Gastrocnemius medialis (tissue), 4 donors: ENCODE measurements at regions of chr6 and their contacts with region 1.

Region 1: GRCh38 chr6:157379656-157380454 is 1.1 kb upstream of the ZDHHC14 start:
- DNase-seq: peak; percentile 86
- ATAC-seq: peak; percentile 78
- H3K4me3 ChIP-seq: peak overlapping the region; percentile 90 to 99 (median 94)
- H3K27ac ChIP-seq: peak overlapping the region; percentile 97 to 98 (median 98)
- H3K4me1 ChIP-seq: peaks cover 14 to 16% of the 10 kb centered on the region in 2 donors
- H3K27me3 ChIP-seq: no peaks in the 10 kb centered on the region
- CTCF ChIP-seq: no peak
- POLR2A ChIP-seq: peak; percentile 5 to 16

Region 2: DNA sequence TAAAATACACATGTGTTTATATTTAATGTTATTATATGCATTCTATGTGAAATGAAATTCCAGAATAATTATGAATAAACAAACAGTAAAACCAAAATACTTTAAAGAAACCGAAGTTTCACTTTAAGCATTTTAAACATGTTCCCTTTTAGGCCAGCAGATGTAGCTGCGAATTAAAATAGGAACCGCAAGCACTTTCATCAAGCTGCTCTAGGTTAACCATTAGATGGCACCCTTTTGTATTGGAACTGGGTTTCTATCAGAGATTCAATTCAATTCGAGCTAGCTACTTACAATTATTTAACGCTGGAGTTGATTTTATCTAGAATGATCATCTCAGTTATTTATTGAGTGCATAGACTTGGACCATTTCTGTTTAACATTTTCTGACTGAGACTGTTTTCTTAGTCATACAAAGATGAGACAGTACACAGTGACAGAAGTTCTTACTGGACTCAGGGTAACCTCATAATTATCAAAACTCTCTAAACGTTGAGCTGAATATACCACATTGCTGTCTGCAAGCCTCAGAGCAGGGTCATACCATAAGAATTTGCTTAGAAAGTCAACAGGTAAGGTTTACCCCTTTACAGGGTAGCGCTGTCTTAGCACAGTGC is 65.0 kb before region 1 on chr6:
- in situ Hi-C with region 1: loop called in 1 of 4 experiments (anchors 10 kb)
- intact Hi-C with region 1: loop called (anchors 1 kb)
- DNase-seq: no peak
- ATAC-seq: peak; percentile 50 to 62
- H3K4me3 ChIP-seq: no peak overlapping the region
- H3K27ac ChIP-seq: peak overlapping the region; percentile 7 to 90 (median 86)
- H3K4me1 ChIP-seq: peaks cover 6 to 30% of the 10 kb centered on the region in 2 donors
- H3K27me3 ChIP-seq: no peaks in the 10 kb centered on the region
- CTCF ChIP-seq: peak; percentile 57 to 82 (median 80)
- POLR2A ChIP-seq: no peak

Region 3: GRCh38 chr6:157329829-157330228 is 50.0 kb before region 1 on chr6:
- in situ Hi-C with region 1: loop called in 2 of 4 experiments (anchors 5 to 10 kb)
- intact Hi-C with region 1: no loop called
- DNase-seq: no peak
- ATAC-seq: no peak
- H3K4me3 ChIP-seq: no peak overlapping the region
- H3K27ac ChIP-seq: no peak overlapping the region
- H3K4me1 ChIP-seq: peaks cover 0 to 25% of the 10 kb centered on the region in 2 donors
- H3K27me3 ChIP-seq: no peaks in the 10 kb centered on the region
- CTCF ChIP-seq: no peak
- POLR2A ChIP-seq: no peak

Region 4: GRCh38 chr6:157412791-157413190 is 32.9 kb after region 1 on chr6:
- in situ Hi-C with region 1: no loop called
- intact Hi-C with region 1: no loop called
- DNase-seq: no peak
- ATAC-seq: no peak
- H3K4me3 ChIP-seq: no peak overlapping the region
- H3K27ac ChIP-seq: no peak overlapping the region
- H3K4me1 ChIP-seq: no peaks in the 10 kb centered on the region
- H3K27me3 ChIP-seq: no peaks in the 10 kb centered on the region
- CTCF ChIP-seq: no peak
- POLR2A ChIP-seq: no peak

Region 5: GRCh38 chr6:157514659-157515496 is 135.0 kb after region 1 on chr6:
- in situ Hi-C with region 1: no loop called
- intact Hi-C with region 1: loop called (anchors 5 kb)
- DNase-seq: peak; percentile 64 to 74
- ATAC-seq: peak; percentile 97 to 98
- H3K4me3 ChIP-seq: no peak overlapping the region
- H3K27ac ChIP-seq: peak overlapping the region; percentile 72 to 83 (median 76)
- H3K4me1 ChIP-seq: peaks cover 16 to 24% of the 10 kb centered on the region in 2 donors
- H3K27me3 ChIP-seq: no peaks in the 10 kb centered on the region
- CTCF ChIP-seq: no peak
- POLR2A ChIP-seq: no peak

Region 6: GRCh38 chr6:157579467-157580031 is 199.7 kb after region 1 on chr6:
- in situ Hi-C with region 1: loop called in 2 of 4 experiments (anchors 25 kb)
- intact Hi-C with region 1: loop called (anchors 5 kb)
- DNase-seq: no peak
- ATAC-seq: no peak
- H3K4me3 ChIP-seq: no peak overlapping the region
- H3K27ac ChIP-seq: no peak overlapping the region
- H3K4me1 ChIP-seq: peaks cover 2 to 12% of the 10 kb centered on the region in 2 donors
- H3K27me3 ChIP-seq: no peaks in the 10 kb centered on the region
- CTCF ChIP-seq: no peak
- POLR2A ChIP-seq: no peak

Region 7: GRCh38 chr6:157800420-157801237 is 420.8 kb after region 1 on chr6:
- in situ Hi-C with region 1: no loop called
- intact Hi-C with region 1: no loop called
- DNase-seq: no peak
- ATAC-seq: no peak
- H3K4me3 ChIP-seq: no peak overlapping the region
- H3K27ac ChIP-seq: no peak overlapping the region
- H3K4me1 ChIP-seq: no peaks in the 10 kb centered on the region
- H3K27me3 ChIP-seq: no peaks in the 10 kb centered on the region
- CTCF ChIP-seq: no peak
- POLR2A ChIP-seq: no peak

Region 8: GRCh38 chr6:157921685-157922367 is 542.0 kb after region 1 on chr6:
- in situ Hi-C with region 1: no loop called
- intact Hi-C with region 1: no loop called
- DNase-seq: peak in 1 of 2 donors; percentile 11
- ATAC-seq: peak in 1 of 2 donors; percentile 33
- H3K4me3 ChIP-seq: no peak overlapping the region
- H3K27ac ChIP-seq: no peak overlapping the region
- H3K4me1 ChIP-seq: no peaks in the 10 kb centered on the region
- H3K27me3 ChIP-seq: no peaks in the 10 kb centered on the region
- CTCF ChIP-seq: no peak
- POLR2A ChIP-seq: no peak